B cell (primary cell): ENCODE measurements at regions of chr16 and their contacts with region 1.

Region 1: DNA sequence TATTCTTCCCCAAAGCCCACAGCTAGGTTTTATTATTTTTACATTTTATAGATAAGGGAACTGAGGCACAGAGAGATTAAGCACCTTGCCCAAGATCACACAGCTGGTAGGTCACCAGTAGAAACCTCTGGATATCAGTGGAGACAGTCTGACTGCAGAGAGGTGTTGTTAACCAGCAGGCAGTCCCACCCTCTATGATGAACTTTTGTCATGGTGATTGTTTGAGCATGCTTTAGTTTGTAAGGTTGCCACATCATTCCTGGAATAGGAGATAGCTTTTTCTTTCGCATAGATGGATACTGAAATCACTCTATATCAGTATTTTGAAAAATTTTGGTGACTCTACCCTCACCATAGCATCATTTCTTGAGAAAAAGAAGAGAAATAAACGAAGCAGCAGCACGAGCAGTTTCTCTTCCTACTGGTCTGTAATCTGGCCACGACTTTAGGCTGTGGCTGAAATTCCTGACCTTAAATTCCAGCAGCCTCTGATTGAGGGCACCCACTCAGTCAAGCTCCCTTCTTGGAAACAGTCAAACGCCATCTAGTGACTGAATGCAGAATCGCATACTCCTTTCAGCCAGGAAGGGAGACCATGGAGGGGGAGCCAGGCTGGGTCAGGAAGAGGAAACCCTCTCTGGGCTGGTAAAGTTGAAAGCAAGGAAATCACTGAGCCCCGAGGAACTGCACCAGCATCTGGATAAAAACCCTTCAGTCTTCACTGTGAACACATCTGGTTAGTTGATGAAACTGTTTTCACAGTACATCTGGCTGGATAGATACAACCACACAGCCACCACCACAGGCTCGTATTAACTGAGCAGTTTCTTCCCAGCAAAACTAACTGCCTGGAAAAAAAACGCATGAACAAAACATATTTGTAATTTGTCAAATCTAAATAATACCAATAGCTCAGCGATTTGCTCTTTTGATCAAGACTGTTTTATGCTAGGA is 108.4 kb upstream of the XYLT1 start:
- DNase-seq: peak; percentile 76
- ATAC-seq: peak; percentile 61
- H3K4me3 ChIP-seq: no peak overlapping the region
- H3K4me3 Mint-ChIP-seq: no peak overlapping the region
- H3K27ac ChIP-seq: no peak overlapping the region
- H3K27ac Mint-ChIP-seq: no peak overlapping the region
- H3K4me1 ChIP-seq: peaks cover 0 to 3% of the 10 kb centered on the region in 2 donors
- H3K4me1 Mint-ChIP-seq: peaks cover 4% of the 10 kb centered on the region
- H3K27me3 ChIP-seq: peaks cover 0 to 4% (median 0%) of the 10 kb centered on the region in 4 experiments
- H3K27me3 Mint-ChIP-seq: no peaks in the 10 kb centered on the region
- CTCF ChIP-seq: peak; percentile 89

Region 2: GRCh38 chr16:16861546-16861945 is 717.7 kb before region 1 on chr16:
- CTCF ChIA-PET with region 1: interaction called, 52 read pairs
- POLR2A ChIA-PET with region 1: no interaction called
- intact Hi-C with region 1: no loop called
- DNase-seq: peak; percentile 67
- ATAC-seq: no peak
- H3K4me3 ChIP-seq: no peak overlapping the region
- H3K4me3 Mint-ChIP-seq: no peak overlapping the region
- H3K27ac ChIP-seq: no peak overlapping the region
- H3K27ac Mint-ChIP-seq: no peak overlapping the region
- H3K4me1 ChIP-seq: no peaks in the 10 kb centered on the region
- H3K4me1 Mint-ChIP-seq: no peaks in the 10 kb centered on the region
- H3K27me3 ChIP-seq: no peaks in the 10 kb centered on the region
- H3K27me3 Mint-ChIP-seq: peaks cover 6% of the 10 kb centered on the region
- CTCF ChIP-seq: peak; percentile 81

Region 3: DNA sequence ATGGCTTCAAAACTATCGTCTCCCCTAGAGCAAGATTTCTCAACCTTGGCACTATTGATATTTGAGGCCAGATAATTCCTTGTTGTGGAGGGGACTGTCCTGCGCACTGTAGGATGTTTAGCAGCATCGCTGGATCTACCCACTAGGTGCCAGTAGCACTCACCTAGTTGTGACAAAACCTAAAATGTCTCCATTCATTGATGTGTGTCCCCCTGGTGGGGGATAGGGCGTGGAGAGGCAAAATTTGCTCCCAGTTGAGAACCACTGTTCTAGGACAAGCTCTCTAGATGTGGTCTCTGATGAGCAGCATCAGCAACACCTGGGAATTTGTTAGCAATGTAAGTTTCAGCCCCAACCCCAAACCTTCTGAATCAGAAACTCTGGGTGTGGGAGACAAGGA is 367.4 kb before region 1 on chr16:
- CTCF ChIA-PET with region 1: interaction called, 9 read pairs
- POLR2A ChIA-PET with region 1: no interaction called
- intact Hi-C with region 1: loop called (anchors 1 kb)
- DNase-seq: peak; percentile 34
- ATAC-seq: peak; percentile 36
- H3K4me3 ChIP-seq: no peak overlapping the region
- H3K4me3 Mint-ChIP-seq: no peak overlapping the region
- H3K27ac ChIP-seq: no peak overlapping the region
- H3K27ac Mint-ChIP-seq: no peak overlapping the region
- H3K4me1 ChIP-seq: no peaks in the 10 kb centered on the region
- H3K4me1 Mint-ChIP-seq: peaks cover 9% of the 10 kb centered on the region
- H3K27me3 ChIP-seq: no peaks in the 10 kb centered on the region
- H3K27me3 Mint-ChIP-seq: no peaks in the 10 kb centered on the region
- CTCF ChIP-seq: peak; percentile 55

Region 4: GRCh38 chr16:17377360-17378324 is 201.6 kb before region 1 on chr16:
- CTCF ChIA-PET with region 1: interaction called, 12 read pairs
- POLR2A ChIA-PET with region 1: no interaction called
- intact Hi-C with region 1: no loop called
- DNase-seq: peak; percentile 90
- ATAC-seq: peak; percentile 90
- H3K4me3 ChIP-seq: peak overlapping the region in 2 of 5 experiments; percentile 27 to 30
- H3K4me3 Mint-ChIP-seq: peak overlapping the region; percentile 66
- H3K27ac ChIP-seq: peak overlapping the region; percentile 84 to 89
- H3K27ac Mint-ChIP-seq: peak overlapping the region; percentile 77
- H3K4me1 ChIP-seq: peaks cover 61 to 81% of the 10 kb centered on the region in 2 donors
- H3K4me1 Mint-ChIP-seq: peaks cover 72% of the 10 kb centered on the region
- H3K27me3 ChIP-seq: no peaks in the 10 kb centered on the region
- H3K27me3 Mint-ChIP-seq: no peaks in the 10 kb centered on the region
- CTCF ChIP-seq: no peak

Region 5: DNA sequence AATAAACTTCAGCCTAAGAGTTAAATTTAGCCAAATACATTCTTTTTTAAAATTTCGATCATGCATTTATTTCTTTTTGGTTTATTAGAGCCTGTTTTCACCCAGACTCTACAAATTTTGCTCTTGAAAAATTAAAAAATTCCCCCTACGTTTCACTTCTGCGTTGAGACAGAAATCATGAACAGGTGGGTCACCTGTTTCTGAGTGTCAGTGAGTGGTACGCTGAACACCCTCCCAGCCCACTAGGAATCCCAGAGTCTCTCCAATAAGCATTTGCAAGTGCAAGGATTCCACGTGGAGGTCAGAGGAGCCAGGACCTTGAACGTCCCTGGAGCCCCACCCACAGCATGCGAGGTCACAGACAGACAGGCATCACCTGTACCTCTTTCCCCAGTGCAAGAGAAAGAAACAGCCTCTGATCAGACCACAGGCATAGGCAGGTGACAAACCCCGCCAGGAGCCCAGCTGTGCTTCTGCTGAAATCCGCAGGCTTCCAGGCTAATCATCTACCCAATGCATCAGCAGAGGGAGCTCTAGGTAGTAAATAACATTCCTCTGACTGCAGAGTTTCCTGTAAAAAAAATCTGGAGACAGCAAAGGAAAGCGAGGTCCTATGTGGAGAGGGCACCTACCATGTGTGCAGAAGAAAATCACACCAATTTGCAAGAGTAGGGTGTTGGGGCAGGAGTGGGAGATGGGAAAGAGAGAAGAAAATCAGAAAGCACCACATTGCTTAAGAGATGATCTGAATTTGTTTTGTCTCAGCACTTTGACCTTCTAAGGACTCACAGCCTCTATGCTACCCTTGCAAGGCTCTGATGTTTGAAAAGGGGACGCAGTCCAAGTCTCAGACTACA is 102.6 kb before region 1 on chr16:
- CTCF ChIA-PET with region 1: interaction called, 17 read pairs
- POLR2A ChIA-PET with region 1: no interaction called
- intact Hi-C with region 1: loop called (anchors 1 kb)
- DNase-seq: peak; percentile 73
- ATAC-seq: peak; percentile 74
- H3K4me3 ChIP-seq: no peak overlapping the region
- H3K4me3 Mint-ChIP-seq: peak overlapping the region; percentile 54
- H3K27ac ChIP-seq: no peak overlapping the region
- H3K27ac Mint-ChIP-seq: no peak overlapping the region
- H3K4me1 ChIP-seq: peaks cover 27 to 31% of the 10 kb centered on the region in 2 donors
- H3K4me1 Mint-ChIP-seq: peaks cover 31% of the 10 kb centered on the region
- H3K27me3 ChIP-seq: peaks cover 0 to 5% (median 0%) of the 10 kb centered on the region in 4 experiments
- H3K27me3 Mint-ChIP-seq: peaks cover 18% of the 10 kb centered on the region
- CTCF ChIP-seq: peak; percentile 48